HepG2 (cell line): ENCODE measurements at regions of chr3 and their contacts with region 1.

Region 1: DNA sequence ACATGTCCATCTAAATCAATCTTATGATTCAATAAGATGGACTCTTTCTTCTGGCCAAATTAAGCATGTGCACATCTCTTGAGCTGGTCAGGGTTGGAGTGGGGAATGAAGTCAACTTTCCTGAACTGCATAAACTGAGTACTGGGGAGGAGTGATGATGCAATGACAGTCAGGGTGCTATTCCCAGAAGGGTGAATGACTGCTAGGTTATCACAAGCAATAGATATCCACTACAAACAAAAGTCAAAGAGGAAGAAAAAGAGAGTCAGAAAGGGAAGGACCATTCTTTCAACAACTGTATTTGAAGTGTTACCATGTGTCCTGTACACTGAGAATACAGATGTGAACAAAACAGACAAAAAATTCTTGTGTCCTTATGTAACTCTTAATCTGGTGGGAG is 70.0 kb downstream of the ALCAM start:
- DNase-seq: peak; percentile 0
- ATAC-seq: no peak
- H3K4me3 ChIP-seq: no peak overlapping the region
- H3K27ac ChIP-seq: no peak overlapping the region
- H3K4me1 ChIP-seq: peaks cover 29% of the 10 kb centered on the region
- H3K27me3 ChIP-seq: no peaks in the 10 kb centered on the region
- CTCF ChIP-seq: no peak
- EP300 ChIP-seq: no peak
- POLR2A ChIP-seq: no peak
- RAD21 ChIP-seq: no peak

Region 2: DNA sequence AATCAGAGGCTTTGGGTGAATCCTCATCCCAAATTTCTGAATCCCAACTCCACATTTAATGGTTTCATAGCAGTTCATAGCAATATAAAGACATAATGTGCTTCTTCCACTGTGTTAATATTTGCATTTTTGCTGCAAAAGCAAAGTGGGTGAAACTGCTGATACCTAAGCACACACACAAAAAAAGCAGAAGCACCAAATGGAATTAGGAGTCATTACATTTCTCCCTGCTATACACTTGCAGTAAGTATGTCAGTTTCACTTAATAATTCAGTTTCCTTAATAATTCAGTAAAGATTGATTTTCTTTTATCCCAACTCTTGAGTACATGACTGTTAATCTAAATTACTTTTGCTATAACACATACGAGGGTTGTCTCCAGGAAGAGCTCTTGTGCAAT is 118.8 kb before region 1 on chr3:
- CTCF ChIA-PET with region 1: no interaction called
- POLR2A ChIA-PET with region 1: no interaction called
- in situ Hi-C with region 1: no loop called
- intact Hi-C with region 1: no loop called
- DNase-seq: no peak
- ATAC-seq: no peak
- H3K4me3 ChIP-seq: no peak overlapping the region
- H3K27ac ChIP-seq: no peak overlapping the region
- H3K4me1 ChIP-seq: no peaks in the 10 kb centered on the region
- H3K27me3 ChIP-seq: no peaks in the 10 kb centered on the region
- CTCF ChIP-seq: no peak
- EP300 ChIP-seq: no peak
- POLR2A ChIP-seq: no peak
- RAD21 ChIP-seq: no peak

Region 3: GRCh38 chr3:105473521-105474223 is 37.0 kb after region 1 on chr3:
- CTCF ChIA-PET with region 1: no interaction called
- POLR2A ChIA-PET with region 1: no interaction called
- in situ Hi-C with region 1: no loop called
- intact Hi-C with region 1: loop called (anchors 5 kb)
- DNase-seq: no peak
- ATAC-seq: no peak
- H3K4me3 ChIP-seq: no peak overlapping the region
- H3K27ac ChIP-seq: no peak overlapping the region
- H3K4me1 ChIP-seq: no peaks in the 10 kb centered on the region
- H3K27me3 ChIP-seq: no peaks in the 10 kb centered on the region
- CTCF ChIP-seq: no peak
- EP300 ChIP-seq: no peak
- POLR2A ChIP-seq: no peak
- RAD21 ChIP-seq: no peak